ENCODE measurements at regions of chrX and their contacts with region 1.

Region 1: GRCh38 chrX:41441934-41442823 is 5.0 kb upstream of the NYX start:
- DNase-seq: peak; percentile 11 to 76 (median 50)
- H3K4me3 ChIP-seq: peak overlapping the region in 58 of 59 donors; percentile 16 to 69 (median 48)
- H3K27ac ChIP-seq: peak overlapping the region in 44 of 59 donors; percentile 2 to 83 (median 51)
- H3K27me3 ChIP-seq: peaks cover 0 to 57% (median 11%) of the 10 kb centered on the region in 45 donors
- CTCF ChIP-seq: peak in 52 of 56 donors; percentile 15 to 68 (median 56)

Region 2: DNA sequence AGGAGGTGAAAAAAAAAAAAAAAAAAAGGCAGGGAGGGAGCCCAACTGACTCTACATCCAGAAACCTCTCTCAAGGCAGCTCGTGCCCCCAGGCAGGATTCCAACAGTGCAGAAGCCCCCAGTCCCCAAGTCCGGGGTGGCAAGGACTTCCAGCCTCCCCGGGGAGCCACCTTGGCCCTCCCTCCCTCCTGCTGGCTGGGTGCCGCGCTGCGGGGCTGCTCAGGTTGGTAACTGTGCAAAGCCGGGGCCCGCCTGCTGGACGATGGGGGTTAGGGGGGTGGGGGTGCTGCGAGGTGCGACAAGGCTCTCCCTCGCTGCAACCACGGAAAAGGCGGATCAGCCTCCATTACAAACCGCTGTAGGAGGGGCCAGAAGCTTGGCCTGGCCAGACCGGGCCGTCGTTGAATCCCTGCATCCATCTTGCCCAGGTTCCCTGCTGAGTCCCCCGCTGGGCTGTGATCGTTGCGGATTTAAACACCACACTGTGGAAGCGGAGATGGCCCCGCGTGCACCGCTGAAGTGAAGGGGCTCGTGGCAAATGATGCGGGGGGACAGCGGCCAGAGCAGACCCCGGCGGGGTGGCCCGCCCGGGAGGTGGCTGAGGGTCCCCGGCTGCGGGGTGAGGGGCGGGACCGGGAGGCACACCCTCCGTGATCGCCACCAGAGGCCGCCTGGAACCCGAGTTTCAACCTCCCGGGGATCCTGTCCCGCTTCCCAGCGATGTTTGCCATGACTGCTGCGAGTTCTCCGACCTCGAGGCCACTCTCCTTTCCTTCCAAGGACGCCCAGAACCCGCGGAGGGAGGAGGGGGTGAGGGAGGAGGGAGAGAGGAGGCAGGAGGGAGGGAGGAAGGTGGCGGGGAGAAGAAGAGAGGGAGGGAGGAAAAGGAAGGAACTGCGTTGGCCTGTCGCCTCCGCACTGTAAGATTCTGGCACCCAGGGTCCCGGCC is 166.2 kb before region 1 on chrX:
- intact Hi-C with region 1: loop called in 1 of 2 experiments (anchors 10 kb)
- DNase-seq: peak; percentile 33 to 74 (median 53)
- H3K4me3 ChIP-seq: peak overlapping the region; percentile 30 to 76 (median 59)
- H3K27ac ChIP-seq: peak overlapping the region in 52 of 59 donors; percentile 1 to 88 (median 71)
- H3K27me3 ChIP-seq: peaks cover 0 to 70% (median 7%) of the 10 kb centered on the region in 45 donors
- CTCF ChIP-seq: peak in 53 of 56 donors; percentile 19 to 70 (median 46)